ENCODE measurements at regions of chr18 and their contacts with region 1.

Region 1: GRCh38 chr18:45890606-45891005 is 65.1 kb downstream of the SIGLEC15 start:
- DNase-seq: no peak
- H3K4me3 Mint-ChIP-seq: no peak overlapping the region
- H3K27ac Mint-ChIP-seq: peak overlapping the region; percentile 57
- H3K4me1 Mint-ChIP-seq: no peaks in the 10 kb centered on the region
- H3K27me3 Mint-ChIP-seq: no peaks in the 10 kb centered on the region

Region 2: GRCh38 chr18:45657357-45658335 is 233.0 kb before region 1 on chr18:
- CTCF ChIA-PET with region 1: no interaction called
- POLR2A ChIA-PET with region 1: interaction called, 10 read pairs
- DNase-seq: peak; percentile 73
- H3K4me3 Mint-ChIP-seq: peak overlapping the region; percentile 5
- H3K27ac Mint-ChIP-seq: peak overlapping the region; percentile 68
- H3K4me1 Mint-ChIP-seq: peaks cover 31% of the 10 kb centered on the region
- H3K27me3 Mint-ChIP-seq: no peaks in the 10 kb centered on the region

Region 3: DNA sequence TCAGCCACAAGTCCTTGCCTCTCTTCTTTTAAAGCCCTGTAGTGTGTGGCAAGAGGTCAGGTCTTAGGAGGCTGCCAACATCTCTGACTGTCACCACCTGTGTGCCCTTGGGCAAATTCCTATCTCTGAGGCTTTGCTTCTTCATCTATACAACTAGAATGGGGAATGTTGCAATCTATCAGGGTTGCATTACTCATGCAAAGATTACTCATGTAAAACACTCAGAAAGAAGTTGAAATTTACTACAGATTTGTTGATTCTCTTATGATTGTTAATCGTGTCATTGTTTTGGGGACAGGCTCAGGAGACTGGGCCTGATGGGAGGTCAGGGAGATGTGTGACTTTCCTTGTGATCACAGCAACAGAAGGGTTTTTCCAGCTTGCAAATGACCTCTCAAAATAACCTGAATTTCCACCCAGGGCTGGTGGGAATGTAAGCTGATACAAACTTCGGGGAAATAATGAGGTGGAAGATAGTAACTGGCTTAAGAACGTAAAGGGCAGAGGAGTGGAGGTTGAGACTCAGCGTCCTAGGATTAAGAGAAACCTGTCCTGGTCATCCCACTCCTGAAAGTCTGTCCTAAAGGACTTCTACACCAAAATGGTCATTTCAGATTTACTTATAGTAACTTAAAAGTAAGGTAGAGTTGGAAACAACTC is 97.2 kb before region 1 on chr18:
- CTCF ChIA-PET with region 1: no interaction called
- POLR2A ChIA-PET with region 1: no interaction called
- DNase-seq: no peak
- H3K4me3 Mint-ChIP-seq: no peak overlapping the region
- H3K27ac Mint-ChIP-seq: no peak overlapping the region
- H3K4me1 Mint-ChIP-seq: no peaks in the 10 kb centered on the region
- H3K27me3 Mint-ChIP-seq: peaks cover 12% of the 10 kb centered on the region